ENCODE measurements at regions of chr22 and their contacts with region 1.

Region 1: DNA sequence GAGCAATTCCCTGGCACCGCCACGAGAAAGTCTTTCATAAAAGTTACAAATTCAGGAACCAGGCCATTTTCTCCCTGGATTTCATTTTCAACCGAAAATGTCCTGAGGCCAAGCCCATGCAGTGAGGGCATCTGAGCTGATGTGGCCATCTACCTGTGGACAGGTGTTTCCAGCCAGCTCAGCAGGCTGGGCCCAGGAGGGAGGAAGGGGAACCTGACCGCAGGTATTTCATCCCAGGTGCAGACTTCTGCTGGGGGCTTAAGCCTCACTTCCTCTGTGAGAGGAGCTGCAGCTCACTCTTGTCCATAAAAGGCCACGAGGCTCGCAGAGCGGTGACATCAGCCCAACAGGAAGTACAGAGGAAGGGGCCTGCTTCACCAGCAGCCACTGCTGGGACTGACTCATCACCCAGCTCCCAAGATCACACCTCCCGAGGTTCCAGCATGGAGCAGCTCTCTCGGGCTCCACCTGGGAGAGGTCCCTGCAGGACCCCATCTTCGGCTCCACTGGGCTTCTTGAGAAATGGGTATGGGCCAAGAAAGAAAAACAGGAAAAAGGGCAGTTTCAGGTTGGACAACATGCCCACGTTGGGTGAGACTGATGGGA is 56.4 kb downstream of the MYH9 start:
- DNase-seq: peak; percentile 48 to 94 (median 81)
- ATAC-seq: peak; percentile 51
- H3K4me3 ChIP-seq: peak overlapping the region; percentile 38 to 42
- H3K4me3 Mint-ChIP-seq: peak overlapping the region; percentile 86
- H3K27ac ChIP-seq: peak overlapping the region; percentile 80 to 93
- H3K27ac Mint-ChIP-seq: peak overlapping the region; percentile 99
- H3K4me1 ChIP-seq: peaks cover 95% of the 10 kb centered on the region
- H3K4me1 Mint-ChIP-seq: peaks cover 99% of the 10 kb centered on the region
- H3K27me3 ChIP-seq: no peaks in the 10 kb centered on the region
- H3K27me3 Mint-ChIP-seq: no peaks in the 10 kb centered on the region
- CTCF ChIP-seq: no peak

Region 2: DNA sequence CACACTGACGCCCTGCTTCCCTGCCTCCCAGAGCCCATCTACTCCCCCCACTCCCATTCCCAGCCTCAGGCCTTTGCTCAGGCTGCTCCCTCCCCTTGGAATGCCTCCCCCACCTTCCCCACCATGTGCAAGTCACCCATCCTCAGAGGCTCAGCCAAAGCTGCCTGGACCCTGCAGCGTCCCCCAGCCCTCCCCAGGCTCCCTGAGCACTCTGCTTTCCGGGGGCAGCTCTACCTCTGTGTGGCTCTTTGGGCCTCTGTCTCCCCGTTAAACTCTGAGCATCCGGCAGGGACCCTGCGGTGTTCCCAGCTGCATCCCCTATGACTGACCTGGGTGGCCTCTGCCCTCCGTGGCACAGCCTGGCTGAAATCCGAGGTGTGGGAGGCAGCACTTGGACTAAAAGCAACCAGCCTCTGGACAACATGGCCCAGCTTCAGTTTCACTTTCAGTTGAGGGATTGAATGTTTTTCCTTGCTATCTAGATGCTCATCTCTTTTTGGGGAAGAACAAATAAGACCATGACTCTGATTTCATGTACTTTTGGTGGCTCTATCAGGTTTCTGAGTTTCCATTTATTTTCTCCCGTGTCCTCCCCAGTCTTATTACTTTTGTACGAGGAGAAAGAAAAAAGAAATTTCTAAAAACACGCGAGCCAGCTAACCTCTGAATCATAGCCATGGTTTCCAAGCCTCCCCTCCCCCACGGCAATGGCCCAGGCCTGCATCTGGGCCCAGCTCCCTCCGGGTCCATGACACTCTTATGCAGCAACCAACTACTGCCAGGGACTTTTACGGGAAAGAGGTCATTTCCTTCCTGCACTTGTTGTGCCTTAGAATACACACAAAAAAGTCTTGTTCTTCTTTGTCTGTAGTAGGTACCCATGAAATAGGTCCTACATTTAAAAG is 174.6 kb before region 1 on chr22:
- CTCF ChIA-PET with region 1: no interaction called
- POLR2A ChIA-PET with region 1: no interaction called
- intact Hi-C with region 1: loop called in 1 of 2 experiments (anchors 5 kb)
- DNase-seq: peak; percentile 36 to 90 (median 80)
- ATAC-seq: peak; percentile 46
- H3K4me3 ChIP-seq: peak overlapping the region; percentile 86 to 91
- H3K4me3 Mint-ChIP-seq: peak overlapping the region; percentile 97
- H3K27ac ChIP-seq: peak overlapping the region; percentile 77 to 96
- H3K27ac Mint-ChIP-seq: peak overlapping the region; percentile 99
- H3K4me1 ChIP-seq: peaks cover 62% of the 10 kb centered on the region
- H3K4me1 Mint-ChIP-seq: peaks cover 90% of the 10 kb centered on the region
- H3K27me3 ChIP-seq: no peaks in the 10 kb centered on the region
- H3K27me3 Mint-ChIP-seq: no peaks in the 10 kb centered on the region
- CTCF ChIP-seq: no peak

Region 3: GRCh38 chr22:36267896-36268485 is 63.4 kb before region 1 on chr22:
- CTCF ChIA-PET with region 1: no interaction called
- POLR2A ChIA-PET with region 1: no interaction called
- intact Hi-C with region 1: no loop called
- DNase-seq: no peak
- ATAC-seq: no peak
- H3K4me3 ChIP-seq: no peak overlapping the region
- H3K4me3 Mint-ChIP-seq: no peak overlapping the region
- H3K27ac ChIP-seq: no peak overlapping the region
- H3K27ac Mint-ChIP-seq: no peak overlapping the region
- H3K4me1 ChIP-seq: no peaks in the 10 kb centered on the region
- H3K4me1 Mint-ChIP-seq: peaks cover 1% of the 10 kb centered on the region
- H3K27me3 ChIP-seq: no peaks in the 10 kb centered on the region
- H3K27me3 Mint-ChIP-seq: no peaks in the 10 kb centered on the region
- CTCF ChIP-seq: no peak

Region 4: DNA sequence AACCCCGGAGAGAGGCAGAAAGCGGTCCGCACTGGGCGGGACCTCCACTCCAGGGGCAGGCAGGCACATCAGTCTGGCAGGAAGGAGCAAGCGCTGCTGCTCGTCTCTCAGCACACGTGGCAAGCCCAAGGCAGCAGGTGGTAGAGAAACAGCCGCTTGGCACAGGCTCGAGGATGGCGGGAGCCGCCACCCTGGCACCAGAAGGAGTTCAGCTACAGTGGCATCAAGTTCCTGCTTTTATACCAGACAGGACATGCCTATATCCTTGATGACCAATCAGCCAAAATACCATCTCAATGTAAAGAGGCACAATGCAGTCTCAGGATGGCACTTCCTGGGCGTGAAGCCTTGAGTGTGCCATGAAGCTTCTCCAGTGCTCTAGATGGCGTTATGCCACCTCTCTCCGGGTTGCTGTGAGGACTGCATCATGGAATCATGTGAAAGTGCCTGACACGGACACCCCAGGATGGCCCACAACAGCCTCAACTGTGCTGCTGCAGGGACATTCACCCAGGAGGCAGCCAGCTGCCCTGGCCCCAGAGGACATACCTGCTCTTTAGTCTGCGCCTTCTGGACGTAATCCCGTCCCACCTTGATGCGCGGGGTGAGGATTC is 13.6 kb before region 1 on chr22:
- CTCF ChIA-PET with region 1: interaction called, 11 read pairs
- POLR2A ChIA-PET with region 1: interaction called, 6 read pairs
- intact Hi-C with region 1: loop called in 1 of 2 experiments (anchors 2 kb)
- DNase-seq: peak in 1 of 9 experiments; percentile 16
- ATAC-seq: no peak
- H3K4me3 ChIP-seq: no peak overlapping the region
- H3K4me3 Mint-ChIP-seq: no peak overlapping the region
- H3K27ac ChIP-seq: no peak overlapping the region
- H3K27ac Mint-ChIP-seq: no peak overlapping the region
- H3K4me1 ChIP-seq: no peaks in the 10 kb centered on the region
- H3K4me1 Mint-ChIP-seq: peaks cover 3% of the 10 kb centered on the region
- H3K27me3 ChIP-seq: no peaks in the 10 kb centered on the region
- H3K27me3 Mint-ChIP-seq: no peaks in the 10 kb centered on the region
- CTCF ChIP-seq: no peak

Region 5: GRCh38 chr22:36359181-36359996 is 28.0 kb after region 1 on chr22:
- CTCF ChIA-PET with region 1: interaction called, 5 read pairs
- POLR2A ChIA-PET with region 1: interaction called, 19 read pairs
- intact Hi-C with region 1: loop called in 1 of 2 experiments (anchors 2 kb)
- DNase-seq: peak in 2 of 9 experiments; percentile 62 to 75
- ATAC-seq: no peak
- H3K4me3 ChIP-seq: no peak overlapping the region
- H3K4me3 Mint-ChIP-seq: peak overlapping the region; percentile 67
- H3K27ac ChIP-seq: peak overlapping the region in 1 of 2 experiments; percentile 77
- H3K27ac Mint-ChIP-seq: peak overlapping the region; percentile 92
- H3K4me1 ChIP-seq: peaks cover 97% of the 10 kb centered on the region
- H3K4me1 Mint-ChIP-seq: peaks cover 95% of the 10 kb centered on the region
- H3K27me3 ChIP-seq: no peaks in the 10 kb centered on the region
- H3K27me3 Mint-ChIP-seq: no peaks in the 10 kb centered on the region
- CTCF ChIP-seq: no peak

Region 6: GRCh38 chr22:36379593-36380361 is 48.4 kb after region 1 on chr22:
- CTCF ChIA-PET with region 1: interaction called, 53 read pairs
- POLR2A ChIA-PET with region 1: interaction called, 124 read pairs
- intact Hi-C with region 1: loop called in 1 of 2 experiments (anchors 2 kb)
- DNase-seq: peak in 7 of 9 experiments; percentile 58 to 81 (median 73)
- ATAC-seq: peak; percentile 33
- H3K4me3 ChIP-seq: peak overlapping the region; percentile 21 to 35
- H3K4me3 Mint-ChIP-seq: peak overlapping the region; percentile 79
- H3K27ac ChIP-seq: peak overlapping the region; percentile 70 to 85
- H3K27ac Mint-ChIP-seq: peak overlapping the region; percentile 99
- H3K4me1 ChIP-seq: peaks cover 89% of the 10 kb centered on the region
- H3K4me1 Mint-ChIP-seq: peaks cover 82% of the 10 kb centered on the region
- H3K27me3 ChIP-seq: no peaks in the 10 kb centered on the region
- H3K27me3 Mint-ChIP-seq: no peaks in the 10 kb centered on the region
- CTCF ChIP-seq: no peak

Region 7: GRCh38 chr22:36470162-36470993 is 139.0 kb after region 1 on chr22:
- CTCF ChIA-PET with region 1: interaction called, 56 read pairs
- POLR2A ChIA-PET with region 1: interaction called, 3 read pairs
- intact Hi-C with region 1: loop called in 1 of 2 experiments (anchors 1 kb)
- DNase-seq: peak; percentile 71 to 91 (median 82)
- ATAC-seq: peak; percentile 98
- H3K4me3 ChIP-seq: no peak overlapping the region
- H3K4me3 Mint-ChIP-seq: no peak overlapping the region
- H3K27ac ChIP-seq: no peak overlapping the region
- H3K27ac Mint-ChIP-seq: peak overlapping the region; percentile 75
- H3K4me1 ChIP-seq: peaks cover 14% of the 10 kb centered on the region
- H3K4me1 Mint-ChIP-seq: peaks cover 18% of the 10 kb centered on the region
- H3K27me3 ChIP-seq: no peaks in the 10 kb centered on the region
- H3K27me3 Mint-ChIP-seq: no peaks in the 10 kb centered on the region
- CTCF ChIP-seq: peak; percentile 88

Measured in CD8-positive, alpha-beta T cell (primary cell).